Activated naive CD4-positive, alpha-beta T cell treated with anti-CD3 and anti-CD28 coated beads for 36 hours (primary cell): ENCODE measurements at regions of chr6 and their contacts with region 1.

Region 1: GRCh38 chr6:149545754-149546528 is at the start of gene PPIL4:
- DNase-seq: peak; percentile 97
- H3K4me3 Mint-ChIP-seq: peak within 1 kb of the TSS; percentile 96
- H3K27ac Mint-ChIP-seq: peak within 1 kb of the TSS; percentile 95
- H3K4me1 Mint-ChIP-seq: peaks cover 37% of the 10 kb centered on the region
- H3K27me3 Mint-ChIP-seq: no peaks in the 10 kb centered on the region
- total RNA-seq, gene PPIL4: 25.8 to 26.2 TPM

Region 2: DNA sequence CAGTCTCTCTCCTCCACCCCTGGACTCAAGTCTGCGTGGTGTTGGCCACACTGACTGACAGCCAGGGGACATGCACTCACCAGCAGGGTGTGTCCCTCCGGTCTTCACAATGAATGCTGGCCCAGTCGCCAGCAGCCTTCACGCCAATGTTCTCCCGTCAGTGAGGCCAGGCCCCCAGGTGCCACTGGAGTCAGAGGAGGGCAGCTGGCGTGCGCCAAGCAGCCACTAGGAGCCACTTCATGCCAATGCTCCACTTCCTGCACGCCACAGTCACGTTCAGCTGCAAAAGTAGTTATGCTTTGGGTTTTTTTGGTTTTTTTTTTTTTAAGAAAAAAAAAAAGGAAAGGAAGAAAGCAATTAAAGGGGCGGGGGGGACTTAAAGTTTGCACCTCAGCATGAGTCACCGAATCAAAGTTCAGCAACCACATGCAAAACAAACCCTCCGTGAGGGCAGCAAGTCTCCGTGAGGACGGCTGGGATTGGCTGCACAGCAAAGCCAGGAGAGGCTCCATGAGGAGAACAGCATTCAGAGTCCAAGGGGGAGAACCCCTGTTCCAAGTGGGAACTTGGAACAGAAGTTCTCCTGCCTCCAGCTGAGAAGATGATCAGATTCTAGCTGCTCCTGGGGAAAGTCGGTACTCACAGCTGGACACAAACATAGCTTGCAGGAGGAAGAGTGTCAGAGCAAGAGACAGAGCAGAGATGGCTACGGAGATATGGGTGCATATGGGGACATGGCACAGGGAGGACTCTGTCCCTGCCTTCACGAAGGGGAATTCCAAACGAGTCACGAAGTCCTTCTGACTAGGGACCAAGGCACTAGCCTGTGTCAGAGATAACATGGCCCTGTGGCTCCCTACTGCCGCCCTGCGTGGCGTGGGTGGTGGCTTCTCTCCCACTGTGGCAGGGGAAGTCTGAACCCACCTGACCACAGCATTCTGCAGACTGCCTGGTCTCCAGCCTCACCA is 60.9 kb before region 1 on chr6 and contains the start of gene ZC3H12D:
- CTCF ChIA-PET with region 1: interaction called, 6 read pairs
- intact Hi-C with region 1: loop called (anchors 1 kb)
- DNase-seq: peak; percentile 92
- H3K4me3 Mint-ChIP-seq: peak within 1 kb of the TSS; percentile 94
- H3K27ac Mint-ChIP-seq: peak within 1 kb of the TSS; percentile 97
- H3K4me1 Mint-ChIP-seq: peaks cover 59% of the 10 kb centered on the region
- H3K27me3 Mint-ChIP-seq: no peaks in the 10 kb centered on the region
- total RNA-seq, gene ZC3H12D: 75.8 to 82.7 TPM

Region 3: GRCh38 chr6:149529650-149530049 is 16.3 kb before region 1 on chr6:
- CTCF ChIA-PET with region 1: interaction called, 7 read pairs
- intact Hi-C with region 1: loop called (anchors 2 kb)
- DNase-seq: no peak
- H3K4me3 Mint-ChIP-seq: no peak overlapping the region
- H3K27ac Mint-ChIP-seq: peak overlapping the region; percentile 46
- H3K4me1 Mint-ChIP-seq: peaks cover 30% of the 10 kb centered on the region
- H3K27me3 Mint-ChIP-seq: no peaks in the 10 kb centered on the region

Region 4: DNA sequence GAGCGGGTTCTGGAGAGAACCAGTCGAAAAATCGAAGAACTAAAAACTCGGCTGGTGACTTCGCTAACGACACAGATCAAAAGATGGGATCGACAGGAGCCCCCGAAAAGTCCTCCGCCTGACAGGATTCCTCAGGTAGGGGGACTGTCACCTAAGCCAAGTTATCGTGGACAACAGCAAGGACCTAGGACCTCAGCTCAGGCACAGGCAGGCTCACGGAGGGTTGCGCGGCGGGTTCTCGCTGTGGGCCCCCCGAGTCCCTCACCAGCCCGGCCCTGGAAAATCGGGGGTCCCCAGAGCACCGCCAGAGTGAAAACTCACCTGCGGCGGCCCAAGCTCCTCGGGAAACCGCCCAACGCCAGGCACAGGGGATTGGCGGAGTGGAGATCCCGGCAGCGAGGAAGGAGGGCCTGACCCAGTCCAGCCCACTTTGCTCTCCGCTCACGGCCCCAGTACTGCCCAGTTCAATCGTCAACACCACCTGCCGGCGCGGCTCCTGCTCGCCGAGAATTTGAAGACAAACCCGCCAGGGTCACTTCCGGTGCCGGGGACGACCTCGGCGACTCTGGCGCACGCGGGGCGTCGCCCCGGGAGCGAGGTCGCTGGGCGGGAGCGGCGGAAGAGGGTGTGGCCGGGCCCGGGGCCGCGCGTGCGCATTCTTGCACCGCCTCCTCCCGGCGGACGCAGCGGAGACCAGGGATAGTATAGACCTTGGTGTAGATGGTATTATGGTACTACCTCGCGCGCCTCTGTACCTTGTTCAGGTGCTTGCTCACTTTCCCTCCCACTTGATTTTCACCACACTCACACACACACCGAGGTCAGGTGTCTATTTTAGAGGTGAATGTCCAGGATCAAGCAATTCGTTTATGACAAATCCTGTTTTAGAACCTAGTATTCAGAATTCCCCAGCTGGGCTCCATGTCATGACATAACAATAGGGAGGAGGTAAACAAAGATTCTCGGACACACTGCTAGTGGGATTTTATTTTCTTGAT is 102.5 kb after region 1 on chr6 and contains the start of gene KATNA1:
- CTCF ChIA-PET with region 1: no interaction called
- intact Hi-C with region 1: loop called (anchors 1 kb)
- DNase-seq: peak; percentile 90
- H3K4me3 Mint-ChIP-seq: peak within 1 kb of the TSS; percentile 79
- H3K27ac Mint-ChIP-seq: peak within 1 kb of the TSS; percentile 65
- H3K4me1 Mint-ChIP-seq: peaks cover 22% of the 10 kb centered on the region
- H3K27me3 Mint-ChIP-seq: no peaks in the 10 kb centered on the region
- total RNA-seq, gene KATNA1: 18.2 to 19.7 TPM

Region 5: GRCh38 chr6:149746147-149746946 is 200.4 kb after region 1 on chr6 and contains the start of gene NUP43:
- CTCF ChIA-PET with region 1: no interaction called
- intact Hi-C with region 1: loop called (anchors 1 kb)
- DNase-seq: peak; percentile 99
- H3K4me3 Mint-ChIP-seq: peak within 1 kb of the TSS; percentile 99
- H3K27ac Mint-ChIP-seq: peak within 1 kb of the TSS; percentile 87
- H3K4me1 Mint-ChIP-seq: peaks cover 31% of the 10 kb centered on the region
- H3K27me3 Mint-ChIP-seq: no peaks in the 10 kb centered on the region
- total RNA-seq, gene NUP43: 68.1 to 71.9 TPM

Region 6: GRCh38 chr6:149925974-149926777 is 380.2 kb after region 1 on chr6:
- CTCF ChIA-PET with region 1: no interaction called
- intact Hi-C with region 1: loop called (anchors 1 kb)
- DNase-seq: peak; percentile 93
- H3K4me3 Mint-ChIP-seq: peak overlapping the region; percentile 44
- H3K27ac Mint-ChIP-seq: no peak overlapping the region
- H3K4me1 Mint-ChIP-seq: peaks cover 15% of the 10 kb centered on the region
- H3K27me3 Mint-ChIP-seq: peaks cover 78% of the 10 kb centered on the region